ENCODE measurements at regions of chr15 and their contacts with region 1.

Region 1: DNA sequence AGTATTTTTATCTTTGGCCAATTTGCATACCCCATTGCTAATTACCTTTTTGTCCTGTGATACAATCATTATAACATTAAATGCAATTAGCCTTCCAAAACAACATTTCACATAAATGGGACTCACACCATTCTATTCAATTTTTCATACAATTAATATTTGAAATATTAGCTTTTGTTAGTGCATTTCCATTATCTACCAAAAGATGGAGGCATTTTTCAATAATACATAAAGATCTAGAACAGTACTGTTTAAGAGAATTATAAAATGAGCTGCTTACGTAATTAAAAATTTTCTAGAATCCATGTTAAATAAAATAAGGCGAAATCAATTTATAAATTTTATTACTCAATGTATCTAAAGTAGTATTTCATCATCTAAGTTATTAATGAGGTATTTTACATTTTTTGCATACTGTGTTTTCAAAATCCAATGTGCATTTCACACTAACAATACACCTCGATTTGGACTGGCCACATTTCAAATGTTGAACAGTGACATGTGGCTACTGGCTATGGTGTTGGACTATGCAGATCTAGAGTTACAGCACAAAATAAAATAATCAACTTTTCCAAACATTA is 74.3 kb downstream of the TJP1 start:
- DNase-seq: peak; percentile 37
- ATAC-seq: peak; percentile 40; the same call in 1 of the 2 replicates
- H3K4me3 ChIP-seq: no peak overlapping the region
- H3K27ac ChIP-seq: no peak overlapping the region
- H3K4me1 ChIP-seq: no peaks in the 10 kb centered on the region
- H3K27me3 ChIP-seq: no peaks in the 10 kb centered on the region
- CTCF ChIP-seq: peak; percentile 50
- POLR2A ChIP-seq: no peak
- RAD21 ChIP-seq: peak; percentile 52

Region 2: DNA sequence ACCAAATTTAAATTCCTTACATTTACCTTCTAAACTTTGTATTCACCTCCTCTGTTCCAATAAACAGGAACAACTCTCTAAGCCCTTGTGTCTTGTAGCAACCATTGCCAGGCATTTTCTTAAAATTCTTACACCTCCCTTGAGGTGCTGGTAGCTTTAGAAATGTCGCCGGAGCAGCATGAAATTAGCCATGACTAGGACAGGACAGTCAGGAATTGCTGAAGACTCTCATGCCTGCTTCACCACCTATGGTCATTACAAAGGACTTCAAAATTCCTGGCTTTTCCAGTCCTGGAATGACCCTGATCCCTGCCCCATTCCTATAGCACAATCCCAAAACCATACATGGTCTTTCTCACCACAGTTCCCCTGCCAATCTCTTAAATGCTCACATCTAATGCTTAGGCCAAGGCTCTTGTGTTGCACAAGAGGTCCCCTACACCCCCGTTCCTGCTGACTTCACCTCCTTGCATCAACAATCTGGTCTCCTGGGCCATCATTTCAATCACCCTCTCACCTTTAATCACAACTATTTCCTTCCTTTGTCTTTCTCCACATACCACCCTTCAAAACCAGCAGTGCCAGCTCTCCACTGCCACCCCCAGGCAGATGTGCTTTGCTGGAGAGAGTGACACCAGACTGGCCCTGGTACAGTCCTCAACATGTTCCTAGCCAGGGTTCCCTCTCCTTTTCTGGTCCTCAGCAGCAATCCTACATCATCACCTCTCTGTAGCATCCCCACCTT is 187.5 kb after region 1 on chr15:
- CTCF ChIA-PET with region 1: no interaction called
- POLR2A ChIA-PET with region 1: no interaction called
- dilution Hi-C with region 1: no loop called
- in situ Hi-C with region 1: no loop called
- intact Hi-C with region 1: loop called (anchors 2 kb)
- DNase-seq: no peak
- ATAC-seq: no peak
- H3K4me3 ChIP-seq: no peak overlapping the region
- H3K27ac ChIP-seq: no peak overlapping the region
- H3K4me1 ChIP-seq: peaks cover 16% of the 10 kb centered on the region
- H3K27me3 ChIP-seq: no peaks in the 10 kb centered on the region
- CTCF ChIP-seq: 0 out of 2 replicates have a peak, but pooled peaks have one; percentile 15
- POLR2A ChIP-seq: no peak
- RAD21 ChIP-seq: peak; percentile 25; the same call in 1 of the 2 replicates

Region 3: GRCh38 chr15:30043211-30043655 is 295.3 kb after region 1 on chr15:
- CTCF ChIA-PET with region 1: no interaction called
- POLR2A ChIA-PET with region 1: no interaction called
- dilution Hi-C with region 1: no loop called
- in situ Hi-C with region 1: no loop called
- intact Hi-C with region 1: loop called (anchors 2 kb)
- DNase-seq: peak; percentile 29
- ATAC-seq: peak; percentile 83
- H3K4me3 ChIP-seq: no peak overlapping the region
- H3K27ac ChIP-seq: no peak overlapping the region
- H3K4me1 ChIP-seq: no peaks in the 10 kb centered on the region
- H3K27me3 ChIP-seq: peaks cover 7% of the 10 kb centered on the region
- CTCF ChIP-seq: peak; percentile 50
- POLR2A ChIP-seq: no peak
- RAD21 ChIP-seq: peak; percentile 44

Region 4: GRCh38 chr15:30073915-30074314 is 326.0 kb after region 1 on chr15:
- CTCF ChIA-PET with region 1: no interaction called
- POLR2A ChIA-PET with region 1: no interaction called
- dilution Hi-C with region 1: no loop called
- in situ Hi-C with region 1: loop called (anchors 10 kb)
- intact Hi-C with region 1: loop called (anchors 10 kb)
- DNase-seq: no peak
- ATAC-seq: no peak
- H3K4me3 ChIP-seq: no peak overlapping the region
- H3K27ac ChIP-seq: no peak overlapping the region
- H3K4me1 ChIP-seq: no peaks in the 10 kb centered on the region
- H3K27me3 ChIP-seq: peaks cover 8% of the 10 kb centered on the region
- CTCF ChIP-seq: no peak
- POLR2A ChIP-seq: no peak
- RAD21 ChIP-seq: no peak

Measured in IMR-90 (cell line).